Activated naive CD4-positive, alpha-beta T cell treated with anti-CD3 and anti-CD28 coated beads for 36 hours (primary cell): ENCODE measurements at regions of chr14 and their contacts with region 1.

Region 1: DNA sequence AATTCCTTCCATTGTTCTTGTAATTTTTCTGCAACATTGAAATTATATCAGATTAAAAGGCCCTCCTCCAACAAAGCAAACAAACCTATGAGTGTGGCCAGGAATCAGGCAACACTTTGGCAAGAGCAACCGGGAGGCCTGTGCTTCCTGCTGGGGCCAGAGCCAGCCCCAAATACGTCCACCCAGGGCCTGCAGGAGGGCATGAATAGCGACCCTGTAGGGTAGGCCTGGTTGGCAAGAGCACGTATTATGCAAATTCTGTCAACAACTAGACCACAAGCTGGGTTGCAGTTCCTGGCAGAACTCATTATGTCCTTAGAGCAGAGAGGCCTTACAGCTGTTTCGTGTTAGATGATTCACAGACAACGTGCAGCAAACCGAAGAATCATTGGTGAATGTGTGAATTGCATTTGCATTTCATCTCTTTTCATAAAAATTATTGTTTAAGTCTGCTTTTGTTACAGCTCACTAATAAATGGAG is 26.9 kb upstream of the LGALS3 start:
- DNase-seq: peak; percentile 70
- H3K4me3 Mint-ChIP-seq: no peak overlapping the region
- H3K27ac Mint-ChIP-seq: no peak overlapping the region
- H3K4me1 Mint-ChIP-seq: peaks cover 38% of the 10 kb centered on the region
- H3K27me3 Mint-ChIP-seq: no peaks in the 10 kb centered on the region

Region 2: GRCh38 chr14:55339770-55340169 is 237.6 kb after region 1 on chr14:
- CTCF ChIA-PET with region 1: no interaction called
- intact Hi-C with region 1: loop called (anchors 5 kb)
- DNase-seq: peak; percentile 40
- H3K4me3 Mint-ChIP-seq: no peak overlapping the region
- H3K27ac Mint-ChIP-seq: no peak overlapping the region
- H3K4me1 Mint-ChIP-seq: peaks cover 70% of the 10 kb centered on the region
- H3K27me3 Mint-ChIP-seq: no peaks in the 10 kb centered on the region